K562 (cell line): ENCODE measurements at regions of chr15 and their contacts with region 1.

Region 1: DNA sequence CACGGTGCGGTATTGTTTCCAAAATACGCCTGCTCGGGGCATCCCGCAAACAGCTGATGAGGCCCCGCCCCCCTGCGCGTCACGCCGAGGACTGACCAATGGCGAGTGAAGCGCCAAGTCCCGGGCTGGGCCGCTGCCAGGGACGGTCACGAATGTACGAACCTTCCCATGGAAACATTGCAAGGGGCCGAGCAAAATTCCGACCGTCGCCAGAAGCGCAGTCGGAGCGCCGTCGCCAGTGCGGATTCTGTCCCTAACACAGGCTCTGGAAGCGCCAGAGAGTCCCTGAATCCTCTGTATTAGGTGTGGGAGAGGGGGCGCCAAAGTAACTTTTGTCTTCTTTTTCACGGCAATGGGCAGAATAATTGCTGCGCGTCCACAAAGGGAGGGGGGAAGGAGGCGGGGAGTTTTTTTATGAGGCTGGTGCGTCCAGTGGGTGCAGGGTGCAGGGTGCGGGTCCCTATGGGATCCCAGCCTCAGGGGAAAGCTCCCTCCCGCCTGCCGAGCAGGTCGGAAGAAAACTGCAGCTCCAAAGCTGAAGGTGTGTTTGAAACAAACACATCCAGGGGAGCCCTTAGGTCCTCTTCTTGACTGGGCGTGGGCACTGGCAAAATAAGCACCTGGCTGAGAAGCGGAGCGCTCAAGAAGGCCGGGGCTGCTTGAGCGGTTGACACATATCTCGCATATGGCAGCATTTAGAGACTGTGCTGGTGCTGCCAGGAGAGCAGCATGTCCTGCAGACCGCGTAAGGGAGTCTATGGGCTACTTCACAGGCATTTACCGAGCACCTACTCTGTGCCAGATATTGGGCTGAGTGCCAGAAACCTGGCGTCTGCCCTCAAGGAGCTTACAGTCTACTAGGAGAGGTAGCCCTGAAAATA is at the start of gene BMF:
- DNase-seq: peak; percentile 96 to 99 (median 97)
- ATAC-seq: peak; percentile 85
- H3K4me3 ChIP-seq: peak within 1 kb of the TSS; percentile 62
- H3K27ac ChIP-seq: peak within 1 kb of the TSS; percentile 29; the same call in 1 of the 3 replicates
- H3K4me1 ChIP-seq: peaks cover 40 to 45% of the 10 kb centered on the region in 2 experiments
- H3K27me3 ChIP-seq: peaks cover 3% of the 10 kb centered on the region in 2 experiments; a peak in 1 of 5 replicates
- CTCF ChIP-seq: peak; percentile 69 to 79 (median 73)
- EP300 ChIP-seq: peak; percentile 63
- POLR2A ChIP-seq: no peak
- RAD21 ChIP-seq: peak; percentile 45 to 47
- polyA plus RNA-seq, gene BMF: not detected

Region 2: GRCh38 chr15:40081691-40082194 is 27.4 kb before region 1 on chr15:
- CTCF ChIA-PET with region 1: no interaction called
- POLR2A ChIA-PET with region 1: interaction called, 3 read pairs
- in situ Hi-C with region 1: no loop called
- intact Hi-C with region 1: loop called (anchors 2 kb)
- DNase-seq: peak; percentile 46 to 70 (median 60)
- ATAC-seq: peak; percentile 86
- H3K4me3 ChIP-seq: 0 out of 2 replicates have a peak overlapping the region, but pooled peaks have one; percentile 8
- H3K27ac ChIP-seq: peak overlapping the region; percentile 27; the same call in 2 of the 3 replicates
- H3K4me1 ChIP-seq: peaks cover 26 to 34% of the 10 kb centered on the region in 2 experiments
- H3K27me3 ChIP-seq: no peaks in the 10 kb centered on the region
- CTCF ChIP-seq: peak in 2 of 3 experiments; percentile 8 to 20; a peak in 1 of 6 replicates
- EP300 ChIP-seq: peak; percentile 46; the same call in 1 of the 2 replicates
- POLR2A ChIP-seq: 0 out of 2 replicates have a peak, but pooled peaks have one; percentile 30
- RAD21 ChIP-seq: no peak

Region 3: DNA sequence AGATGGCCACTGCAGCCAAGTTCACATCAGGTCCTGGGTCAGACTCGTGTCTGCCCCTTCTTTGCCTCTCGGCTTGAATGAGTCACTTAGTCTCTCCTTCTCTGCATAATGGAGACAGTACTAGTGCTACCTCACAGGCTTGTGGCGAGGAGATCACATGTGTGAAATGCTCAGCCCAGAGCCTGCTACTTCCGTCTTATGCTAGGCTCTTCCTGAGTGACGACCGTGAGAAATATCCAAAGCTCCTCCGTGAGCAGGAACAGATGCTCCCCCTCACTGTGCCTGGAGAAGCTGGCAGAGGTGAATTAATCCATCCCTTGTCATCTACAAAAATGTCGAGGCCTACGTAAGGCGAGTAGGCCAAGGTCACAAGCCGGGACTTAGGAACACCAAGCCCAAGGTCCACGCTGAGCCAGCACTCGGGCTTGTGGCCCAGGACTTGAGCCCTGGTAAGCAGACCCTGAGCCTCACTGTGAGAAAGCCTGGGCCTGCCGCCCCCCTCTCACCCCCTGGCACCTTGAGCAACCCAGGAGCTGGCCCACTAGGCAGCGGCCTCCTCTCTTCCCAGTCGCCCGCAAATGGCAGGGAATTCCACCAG is 147.6 kb after region 1 on chr15:
- CTCF ChIA-PET with region 1: no interaction called
- POLR2A ChIA-PET with region 1: no interaction called
- in situ Hi-C with region 1: no loop called
- intact Hi-C with region 1: no loop called
- DNase-seq: no peak
- ATAC-seq: peak; percentile 14; the same call in 1 of the 3 replicates
- H3K4me3 ChIP-seq: no peak overlapping the region
- H3K27ac ChIP-seq: no peak overlapping the region
- H3K4me1 ChIP-seq: peaks cover 6 to 29% of the 10 kb centered on the region in 2 experiments; a peak in 3 of 5 replicates
- H3K27me3 ChIP-seq: peaks cover 2 to 8% of the 10 kb centered on the region in 2 experiments; a peak in 3 of 5 replicates
- CTCF ChIP-seq: no peak
- EP300 ChIP-seq: no peak
- POLR2A ChIP-seq: no peak
- RAD21 ChIP-seq: no peak

Region 4: GRCh38 chr15:40763801-40764732 is 655.0 kb after region 1 on chr15 and contains the start of gene GCHFR:
- CTCF ChIA-PET with region 1: no interaction called
- POLR2A ChIA-PET with region 1: no interaction called
- in situ Hi-C with region 1: no loop called
- intact Hi-C with region 1: no loop called
- DNase-seq: peak; percentile 88 to 93 (median 92)
- ATAC-seq: peak; percentile 87
- H3K4me3 ChIP-seq: peak within 1 kb of the TSS; percentile 64
- H3K27ac ChIP-seq: peak within 1 kb of the TSS; percentile 82
- H3K4me1 ChIP-seq: peaks cover 21 to 57% of the 10 kb centered on the region in 2 experiments; a peak in 4 of 5 replicates
- H3K27me3 ChIP-seq: no peaks in the 10 kb centered on the region
- CTCF ChIP-seq: peak; percentile 56 to 61 (median 58); a peak in 5 of 6 replicates
- EP300 ChIP-seq: no peak
- POLR2A ChIP-seq: peak; percentile 68
- RAD21 ChIP-seq: peak in 1 of 2 experiments; percentile 8; a peak in 1 of 4 replicates
- polyA plus RNA-seq, gene GCHFR: 10.1 to 18.2 TPM